K562 (cell line): ENCODE measurements at regions of chrX and their contacts with region 1.

Region 1: GRCh38 chrX:13638826-13639225 is 14.1 kb upstream of the TCEANC start:
- DNase-seq: no peak
- ATAC-seq: no peak
- H3K4me3 ChIP-seq: no peak overlapping the region
- H3K27ac ChIP-seq: no peak overlapping the region
- H3K4me1 ChIP-seq: no peaks in the 10 kb centered on the region
- H3K27me3 ChIP-seq: no peaks in the 10 kb centered on the region
- CTCF ChIP-seq: no peak
- EP300 ChIP-seq: no peak
- POLR2A ChIP-seq: no peak
- RAD21 ChIP-seq: no peak

Region 2: DNA sequence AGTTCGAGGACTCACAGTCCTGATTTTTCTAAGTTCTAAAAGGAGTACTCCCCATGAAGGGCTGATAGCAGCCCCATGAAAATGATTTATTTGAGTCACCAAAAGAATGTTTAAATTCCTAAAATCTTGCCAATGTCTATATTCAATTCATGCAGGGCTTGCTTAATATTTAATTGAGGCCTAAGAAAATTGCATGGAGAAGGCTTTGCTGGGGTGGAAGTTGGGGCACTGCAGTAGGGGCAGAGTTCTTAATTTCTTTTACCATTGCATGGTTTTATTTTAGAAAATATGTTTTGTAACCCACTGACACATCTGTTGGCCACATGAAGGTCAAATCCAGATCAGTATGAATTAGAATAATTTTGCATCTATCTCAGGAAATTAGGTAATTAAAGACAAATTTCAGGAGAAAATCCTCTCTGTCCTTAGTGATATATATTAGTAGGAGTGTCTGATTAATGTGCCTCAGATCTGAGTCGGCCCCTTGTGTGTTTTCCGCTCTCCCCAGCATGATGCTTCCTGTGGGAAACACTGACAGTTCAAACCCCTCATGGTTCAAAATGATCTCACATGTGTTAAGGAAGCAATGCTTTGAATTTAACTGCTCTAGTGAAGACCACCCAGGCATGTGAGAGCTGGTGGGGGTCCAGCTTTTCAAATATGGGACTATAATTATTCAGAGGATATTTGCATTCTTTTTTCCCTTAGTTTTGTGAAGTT is 123.5 kb before region 1 on chrX:
- CTCF ChIA-PET with region 1: no interaction called
- POLR2A ChIA-PET with region 1: no interaction called
- in situ Hi-C with region 1: loop called (anchors 5 kb)
- intact Hi-C with region 1: no loop called
- DNase-seq: no peak
- ATAC-seq: no peak
- H3K4me3 ChIP-seq: no peak overlapping the region
- H3K27ac ChIP-seq: no peak overlapping the region
- H3K4me1 ChIP-seq: no peaks in the 10 kb centered on the region
- H3K27me3 ChIP-seq: no peaks in the 10 kb centered on the region
- CTCF ChIP-seq: no peak
- EP300 ChIP-seq: no peak
- POLR2A ChIP-seq: no peak
- RAD21 ChIP-seq: no peak